ENCODE measurements at regions of chr11 and their contacts with region 1.

Region 1: GRCh38 chr11:19553683-19554333 is 158.8 kb upstream of the NAV2 start:
- DNase-seq: peak; percentile 18
- ATAC-seq: peak; percentile 88
- H3K4me3 ChIP-seq: no peak overlapping the region
- H3K27ac ChIP-seq: no peak overlapping the region
- H3K4me1 ChIP-seq: no peaks in the 10 kb centered on the region
- H3K27me3 ChIP-seq: peaks cover 6% of the 10 kb centered on the region; the same call in 1 of the 2 replicates
- CTCF ChIP-seq: peak; percentile 88

Region 2: DNA sequence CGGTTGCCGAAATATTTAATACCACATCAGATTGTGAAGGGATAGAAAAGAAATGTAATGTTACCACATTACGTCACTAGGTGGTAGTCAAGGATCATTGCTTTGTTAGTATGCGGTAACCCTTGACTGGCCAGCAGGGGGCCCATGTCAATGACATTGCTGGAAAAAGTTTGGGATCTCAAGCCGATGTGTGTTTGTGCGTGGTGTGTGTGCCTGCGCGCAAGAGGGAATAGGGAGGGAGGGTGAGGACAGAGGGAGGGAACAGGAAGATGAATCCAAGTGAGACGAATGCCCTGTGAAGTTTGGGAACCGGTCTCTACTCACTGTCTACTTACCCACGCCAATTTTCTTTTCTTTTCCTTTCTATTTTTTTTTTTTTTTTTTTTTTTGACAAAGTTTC is 482.6 kb before region 1 on chr11:
- CTCF ChIA-PET with region 1: interaction called, 10 read pairs
- POLR2A ChIA-PET with region 1: no interaction called
- in situ Hi-C with region 1: no loop called
- intact Hi-C with region 1: loop called (anchors 2 kb)
- DNase-seq: peak; percentile 73
- ATAC-seq: peak; percentile 95
- H3K4me3 ChIP-seq: peak overlapping the region; percentile 12 to 40; a peak in 3 of 4 replicates
- H3K27ac ChIP-seq: no peak overlapping the region
- H3K4me1 ChIP-seq: no peaks in the 10 kb centered on the region; the same call in 1 of the 2 replicates
- H3K27me3 ChIP-seq: no peaks in the 10 kb centered on the region; the same call in 1 of the 2 replicates
- CTCF ChIP-seq: peak; percentile 98

Region 3: GRCh38 chr11:19259487-19260345 is 294.1 kb before region 1 on chr11:
- CTCF ChIA-PET with region 1: interaction called, 3 read pairs
- POLR2A ChIA-PET with region 1: no interaction called
- in situ Hi-C with region 1: no loop called
- intact Hi-C with region 1: loop called (anchors 1 kb)
- DNase-seq: no peak
- ATAC-seq: peak; percentile 82
- H3K4me3 ChIP-seq: no peak overlapping the region
- H3K27ac ChIP-seq: no peak overlapping the region
- H3K4me1 ChIP-seq: no peaks in the 10 kb centered on the region
- H3K27me3 ChIP-seq: no peaks in the 10 kb centered on the region
- CTCF ChIP-seq: peak; percentile 97

Region 4: DNA sequence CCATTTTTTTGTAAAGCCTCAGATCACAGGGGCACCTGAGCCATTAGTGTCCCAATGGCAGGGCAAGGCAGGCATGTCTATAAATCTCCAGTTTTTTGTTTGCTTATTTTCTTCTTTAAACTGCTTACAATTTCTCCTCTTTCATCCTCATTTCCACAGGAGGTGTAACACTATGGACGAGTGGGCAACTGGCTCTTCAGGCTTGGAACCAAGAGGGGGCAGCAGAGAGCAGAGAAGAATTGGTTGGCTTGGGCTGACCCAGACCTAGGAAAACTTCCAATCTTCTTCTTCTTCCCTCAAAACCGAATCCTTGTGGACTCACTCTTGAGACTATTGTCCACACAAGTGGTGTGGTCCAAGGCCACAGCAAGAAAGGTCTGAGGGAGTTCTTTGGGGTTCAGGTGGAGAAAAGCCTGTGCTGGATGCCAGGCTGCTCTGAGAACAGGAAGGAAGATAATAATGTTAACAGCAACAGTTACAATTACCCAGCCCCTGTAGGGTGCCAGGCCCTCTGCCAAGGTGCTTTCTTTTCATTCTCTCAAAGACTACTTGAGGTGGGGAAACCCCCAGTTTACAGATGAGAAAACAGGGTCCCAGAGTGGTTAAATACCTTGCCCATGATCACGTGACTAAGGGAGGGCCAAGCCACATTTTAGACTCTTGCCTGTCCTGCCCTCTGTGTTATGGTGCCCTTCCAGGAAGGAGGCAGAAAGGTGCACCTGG is 242.3 kb before region 1 on chr11:
- CTCF ChIA-PET with region 1: interaction called, 3 read pairs
- POLR2A ChIA-PET with region 1: no interaction called
- in situ Hi-C with region 1: no loop called
- intact Hi-C with region 1: loop called (anchors 1 kb)
- DNase-seq: peak; percentile 41
- ATAC-seq: peak; percentile 92
- H3K4me3 ChIP-seq: no peak overlapping the region
- H3K27ac ChIP-seq: no peak overlapping the region
- H3K4me1 ChIP-seq: no peaks in the 10 kb centered on the region
- H3K27me3 ChIP-seq: peaks cover 2% of the 10 kb centered on the region
- CTCF ChIP-seq: peak; percentile 88

Region 5: DNA sequence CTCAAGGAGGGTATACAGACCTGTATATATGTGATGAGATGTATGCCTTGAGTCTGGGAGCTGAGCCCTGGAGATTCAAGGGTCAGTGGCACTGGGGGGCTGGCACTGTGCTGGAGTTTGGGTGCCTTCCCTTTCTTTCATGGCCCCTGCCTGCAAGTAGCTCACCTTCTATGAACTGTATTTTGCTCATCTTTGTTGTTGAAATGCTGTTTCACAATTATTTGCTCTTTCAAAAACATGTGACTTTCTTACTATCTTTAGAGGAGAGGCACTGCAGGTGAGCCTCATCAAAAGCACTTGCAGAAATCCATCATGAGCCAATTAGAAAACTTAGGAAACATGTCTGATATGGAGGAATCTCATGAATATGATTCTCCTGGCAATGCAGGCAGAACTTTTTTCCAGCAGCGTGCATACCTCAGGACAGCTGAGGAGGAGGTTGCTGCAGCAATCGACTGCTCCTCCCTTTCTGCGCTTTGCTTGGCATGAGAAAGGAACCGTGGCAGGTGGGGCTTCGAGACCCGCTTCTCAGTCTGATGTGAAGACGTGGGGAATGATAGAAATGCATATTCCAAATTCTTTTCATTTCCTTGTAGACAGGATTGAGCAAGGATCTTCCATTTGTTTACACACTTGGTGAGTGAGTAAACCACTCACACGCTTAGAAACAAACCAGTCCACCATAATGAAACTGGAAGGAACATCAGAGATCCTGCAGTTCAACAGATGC is 134.6 kb before region 1 on chr11:
- CTCF ChIA-PET with region 1: no interaction called
- POLR2A ChIA-PET with region 1: no interaction called
- in situ Hi-C with region 1: no loop called
- intact Hi-C with region 1: no loop called
- DNase-seq: no peak
- ATAC-seq: no peak
- H3K4me3 ChIP-seq: no peak overlapping the region
- H3K27ac ChIP-seq: no peak overlapping the region
- H3K4me1 ChIP-seq: no peaks in the 10 kb centered on the region
- H3K27me3 ChIP-seq: no peaks in the 10 kb centered on the region; the same call in 1 of the 2 replicates
- CTCF ChIP-seq: no peak

Region 6: DNA sequence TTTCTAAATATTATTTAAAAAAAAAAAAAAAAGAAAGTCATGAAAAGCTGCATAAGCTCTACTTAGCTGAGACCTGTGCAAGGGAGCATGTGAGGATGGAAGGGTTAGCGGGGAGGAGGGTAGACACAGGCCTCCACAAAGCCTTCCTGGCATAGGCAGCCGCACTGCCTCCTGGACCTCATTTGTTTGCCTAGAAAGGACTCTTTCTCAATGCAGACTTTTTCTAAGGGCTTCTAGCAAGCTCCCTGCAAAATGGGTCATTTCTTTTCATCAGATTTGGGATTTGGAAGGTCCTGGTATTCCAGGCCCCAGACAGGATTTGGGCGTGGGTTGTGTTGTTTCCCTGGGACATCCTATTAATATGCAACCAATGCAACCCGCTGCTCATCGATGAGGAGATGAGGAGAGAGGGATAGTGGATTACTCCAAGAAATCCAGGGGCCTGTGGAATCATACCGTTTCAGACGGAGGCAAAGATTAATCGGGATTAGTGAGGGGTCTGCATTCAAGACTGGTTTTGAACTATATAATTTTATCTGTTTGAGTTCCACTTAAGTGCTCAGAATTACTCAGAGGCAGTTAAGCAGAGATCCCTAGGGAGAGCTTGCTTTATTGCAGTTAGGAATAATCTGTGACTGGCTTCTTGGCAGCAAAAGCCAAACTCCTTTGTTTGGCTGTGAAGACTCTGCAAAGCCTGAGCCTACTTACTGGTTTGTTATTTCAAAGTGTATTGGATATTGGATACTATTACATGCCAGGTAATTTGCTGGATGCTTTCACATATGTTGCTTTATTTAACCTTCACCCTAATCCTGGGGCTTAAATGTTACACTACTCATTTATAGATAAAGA is 51.9 kb after region 1 on chr11:
- CTCF ChIA-PET with region 1: no interaction called
- POLR2A ChIA-PET with region 1: no interaction called
- in situ Hi-C with region 1: no loop called
- intact Hi-C with region 1: no loop called
- DNase-seq: no peak
- ATAC-seq: no peak
- H3K4me3 ChIP-seq: no peak overlapping the region
- H3K27ac ChIP-seq: no peak overlapping the region
- H3K4me1 ChIP-seq: no peaks in the 10 kb centered on the region
- H3K27me3 ChIP-seq: peaks cover 5% of the 10 kb centered on the region
- CTCF ChIP-seq: no peak

Region 7: DNA sequence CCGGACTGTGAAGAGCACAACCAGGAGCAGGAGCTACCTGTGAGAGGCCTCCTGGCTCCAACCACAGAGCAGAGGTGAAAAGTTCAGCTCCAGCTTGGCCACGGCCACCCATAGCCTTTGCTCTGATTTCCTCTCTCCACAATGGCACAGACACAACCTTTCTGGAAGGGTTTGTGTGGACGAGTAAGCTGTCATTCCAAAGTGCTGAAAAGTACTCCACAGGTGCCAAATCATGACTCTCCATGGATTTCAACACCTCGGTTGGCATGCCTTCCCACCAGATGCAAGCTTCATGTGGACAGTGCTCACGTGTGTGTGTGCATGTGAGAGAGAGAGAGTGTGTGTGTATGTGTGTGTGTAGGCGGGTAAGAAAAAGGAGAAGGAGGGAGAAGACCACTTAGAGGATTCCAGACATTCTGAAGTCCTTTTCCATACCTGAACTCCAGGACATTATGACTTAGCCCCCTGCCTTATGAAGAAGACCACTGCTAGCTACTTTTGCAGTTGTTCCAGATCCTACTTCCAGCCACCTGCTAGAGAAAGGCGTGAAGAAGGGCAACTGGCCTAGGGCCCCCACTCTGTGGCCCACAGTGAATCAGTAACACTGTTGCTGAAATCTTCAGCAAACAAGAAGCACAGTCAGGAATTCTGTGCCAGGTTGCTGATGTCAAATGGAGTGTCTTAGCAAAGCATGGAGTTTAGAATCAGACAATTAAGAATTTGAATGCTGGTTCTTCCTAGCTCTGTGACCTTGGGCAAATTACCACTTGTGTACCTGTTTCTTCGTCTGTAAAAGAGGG is 144.9 kb after region 1 on chr11:
- CTCF ChIA-PET with region 1: no interaction called
- POLR2A ChIA-PET with region 1: no interaction called
- in situ Hi-C with region 1: no loop called
- intact Hi-C with region 1: no loop called
- DNase-seq: no peak
- ATAC-seq: no peak
- H3K4me3 ChIP-seq: no peak overlapping the region
- H3K27ac ChIP-seq: no peak overlapping the region
- H3K4me1 ChIP-seq: no peaks in the 10 kb centered on the region
- H3K27me3 ChIP-seq: no peaks in the 10 kb centered on the region
- CTCF ChIP-seq: no peak

Measured in Panc1 (cell line).